Mammary epithelial cell (primary cell): ENCODE measurements at regions of chr2 and their contacts with region 1.

Region 1: GRCh38 chr2:231364961-231365810 is 30.3 kb upstream of the B3GNT7 start:
- DNase-seq: peak; percentile 92
- H3K4me3 ChIP-seq: no peak overlapping the region
- H3K27ac ChIP-seq: peak overlapping the region; percentile 73
- H3K4me1 ChIP-seq: peaks cover 15% of the 10 kb centered on the region
- H3K27me3 ChIP-seq: no peaks in the 10 kb centered on the region
- CTCF ChIP-seq: no peak

Region 2: GRCh38 chr2:231290321-231291015 is 74.7 kb before region 1 on chr2:
- CTCF ChIA-PET with region 1: no interaction called
- dilution Hi-C with region 1: no loop called
- in situ Hi-C with region 1: no loop called
- intact Hi-C with region 1: no loop called
- DNase-seq: no peak
- H3K4me3 ChIP-seq: no peak overlapping the region
- H3K27ac ChIP-seq: peak overlapping the region; percentile 3
- H3K4me1 ChIP-seq: peaks cover 15% of the 10 kb centered on the region
- H3K27me3 ChIP-seq: no peaks in the 10 kb centered on the region
- CTCF ChIP-seq: no peak

Region 3: GRCh38 chr2:231334179-231334930 is 30.8 kb before region 1 on chr2:
- CTCF ChIA-PET with region 1: no interaction called
- dilution Hi-C with region 1: loop called (anchors 5 kb)
- in situ Hi-C with region 1: no loop called
- intact Hi-C with region 1: no loop called
- DNase-seq: no peak
- H3K4me3 ChIP-seq: no peak overlapping the region
- H3K27ac ChIP-seq: no peak overlapping the region
- H3K4me1 ChIP-seq: peaks cover 7% of the 10 kb centered on the region
- H3K27me3 ChIP-seq: no peaks in the 10 kb centered on the region
- CTCF ChIP-seq: no peak